ENCODE measurements at regions of chr11 and their contacts with region 1.

Region 1: DNA sequence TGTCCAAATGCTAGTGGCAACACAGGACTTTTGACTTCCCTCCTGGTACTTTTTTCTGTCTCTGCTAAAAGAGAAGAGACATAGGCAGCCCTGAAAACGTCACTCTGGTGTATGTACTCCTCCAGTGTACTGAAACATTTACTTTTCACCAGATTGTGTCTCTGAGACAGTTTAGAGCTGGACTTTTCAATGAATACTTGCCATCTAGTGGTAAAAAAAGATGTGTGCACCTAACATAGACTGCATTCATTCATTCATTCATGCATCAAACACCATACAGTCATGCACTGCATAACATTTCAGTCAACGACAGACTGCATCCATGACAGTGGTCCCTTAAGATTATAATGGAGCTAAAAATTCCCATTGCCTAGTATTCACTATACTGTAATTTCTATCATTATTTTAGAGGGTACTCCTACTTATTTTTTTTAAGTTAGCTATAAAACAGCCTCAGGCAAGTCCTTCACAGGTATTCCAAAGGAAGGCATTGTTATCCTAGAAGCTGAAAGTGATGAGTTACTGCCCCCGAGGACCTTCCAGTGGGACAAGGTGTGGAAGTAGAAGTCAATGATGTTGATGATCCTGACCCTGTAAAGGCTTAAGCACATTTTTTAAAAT is 186.2 kb downstream of the SPON1 start:
- DNase-seq: peak; percentile 3
- H3K4me3 ChIP-seq: no peak overlapping the region
- H3K27ac ChIP-seq: no peak overlapping the region
- H3K27me3 ChIP-seq: no peaks in the 10 kb centered on the region
- CTCF ChIP-seq: peak; percentile 70

Region 2: DNA sequence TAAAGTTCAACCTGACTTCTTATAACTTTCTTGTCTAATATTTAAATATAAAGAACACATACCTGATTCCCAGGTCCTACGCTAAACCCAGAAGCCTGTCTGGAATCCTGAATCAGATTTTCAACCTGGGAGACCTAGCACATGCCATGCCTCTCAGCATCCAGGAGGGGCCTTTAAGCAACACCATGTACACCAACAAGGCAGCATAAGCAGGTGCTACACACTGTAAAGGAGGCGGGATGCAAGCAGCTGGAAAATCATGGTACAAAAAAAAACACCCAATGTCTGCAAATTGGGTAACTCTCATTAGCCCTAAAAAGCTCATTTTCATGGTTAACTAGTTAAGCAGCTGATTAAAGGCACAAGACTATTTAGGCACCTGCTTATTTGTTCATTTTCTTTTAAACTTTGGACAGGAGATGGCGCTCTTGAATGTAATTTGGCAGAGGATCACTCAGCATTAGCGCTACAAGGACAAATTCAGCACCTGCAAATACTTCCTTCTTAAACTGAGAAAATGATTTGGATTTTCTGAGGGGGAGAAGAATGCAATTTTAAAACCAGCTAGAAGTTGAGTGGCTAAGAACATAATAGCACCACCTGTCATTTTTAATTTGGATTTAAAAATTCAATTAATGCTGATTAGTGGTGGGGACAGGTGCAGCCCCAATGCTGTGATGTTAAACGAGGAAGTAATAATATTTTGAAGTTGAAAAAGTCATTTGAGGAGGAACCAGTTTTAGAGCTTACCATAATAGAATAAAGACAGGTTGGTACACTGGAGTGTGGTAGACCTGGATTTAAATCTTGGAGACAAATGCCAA is 376.3 kb before region 1 on chr11:
- CTCF ChIA-PET with region 1: interaction called, 11 read pairs
- POLR2A ChIA-PET with region 1: no interaction called
- DNase-seq: peak; percentile 10
- H3K4me3 ChIP-seq: no peak overlapping the region
- H3K27ac ChIP-seq: no peak overlapping the region
- H3K27me3 ChIP-seq: peaks cover 4% of the 10 kb centered on the region
- CTCF ChIP-seq: peak; percentile 46

Region 3: DNA sequence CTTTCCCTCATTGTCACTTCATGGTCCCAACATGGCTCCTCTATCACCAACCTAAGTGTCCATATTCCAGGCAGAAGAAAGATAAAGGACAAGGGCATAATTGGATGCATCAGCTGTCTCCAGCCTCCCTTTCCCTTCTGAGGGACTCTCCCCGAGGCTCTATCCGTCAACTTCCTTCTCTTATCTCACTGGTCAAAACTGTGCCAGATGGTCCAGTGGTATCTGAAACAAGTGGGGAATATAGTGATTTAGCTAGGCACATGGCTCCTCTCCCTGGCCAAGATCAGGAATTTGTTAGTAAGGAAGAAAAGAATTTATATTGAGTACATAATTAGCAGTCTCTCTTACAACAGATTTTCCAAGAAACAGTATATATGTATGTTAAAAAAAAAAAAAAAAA is 198.9 kb before region 1 on chr11:
- CTCF ChIA-PET with region 1: interaction called, 266 read pairs
- POLR2A ChIA-PET with region 1: no interaction called
- DNase-seq: no peak
- H3K4me3 ChIP-seq: no peak overlapping the region
- H3K27ac ChIP-seq: no peak overlapping the region
- H3K27me3 ChIP-seq: no peaks in the 10 kb centered on the region
- CTCF ChIP-seq: no peak

Region 4: DNA sequence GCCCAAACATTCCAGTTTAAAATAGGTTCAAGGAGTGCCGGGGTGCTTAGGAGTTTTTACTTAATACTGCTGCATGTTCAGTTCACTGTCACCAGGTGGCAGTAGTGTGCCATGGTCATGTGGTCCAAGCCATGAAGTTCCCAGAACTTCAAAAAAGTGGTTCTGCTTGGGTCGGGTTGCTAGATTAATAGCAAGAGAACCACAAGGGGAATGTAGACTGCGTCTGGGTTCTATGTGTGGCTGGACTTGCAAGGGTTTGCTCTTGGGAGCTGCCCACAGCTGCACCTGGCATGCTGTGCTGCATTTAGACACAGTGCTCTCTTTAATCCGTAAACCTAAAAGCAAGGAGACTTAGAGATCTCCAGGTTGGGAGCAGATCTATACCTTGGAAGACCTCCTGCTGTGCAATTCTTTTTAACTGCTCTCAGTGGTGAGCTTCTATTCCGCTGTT is 192.8 kb before region 1 on chr11:
- CTCF ChIA-PET with region 1: interaction called, 266 read pairs
- POLR2A ChIA-PET with region 1: no interaction called
- DNase-seq: peak; percentile 26
- H3K4me3 ChIP-seq: no peak overlapping the region
- H3K27ac ChIP-seq: no peak overlapping the region
- H3K27me3 ChIP-seq: peaks cover 32% of the 10 kb centered on the region
- CTCF ChIP-seq: peak; percentile 92

Region 5: GRCh38 chr11:13963169-13963948 is 185.4 kb before region 1 on chr11:
- CTCF ChIA-PET with region 1: interaction called, 266 read pairs
- POLR2A ChIA-PET with region 1: no interaction called
- DNase-seq: no peak
- H3K4me3 ChIP-seq: peak overlapping the region; percentile 38; the same call in 1 of the 2 replicates
- H3K27ac ChIP-seq: no peak overlapping the region
- H3K27me3 ChIP-seq: peaks cover 80% of the 10 kb centered on the region
- CTCF ChIP-seq: no peak

Region 6: GRCh38 chr11:13970986-13971385 is 177.8 kb before region 1 on chr11:
- CTCF ChIA-PET with region 1: interaction called, 26 read pairs
- POLR2A ChIA-PET with region 1: no interaction called
- DNase-seq: no peak
- H3K4me3 ChIP-seq: no peak overlapping the region
- H3K27ac ChIP-seq: no peak overlapping the region
- H3K27me3 ChIP-seq: peaks cover 24% of the 10 kb centered on the region
- CTCF ChIP-seq: peak; percentile 45